ENCODE measurements at regions of chr4 and their contacts with region 1.

Region 1: DNA sequence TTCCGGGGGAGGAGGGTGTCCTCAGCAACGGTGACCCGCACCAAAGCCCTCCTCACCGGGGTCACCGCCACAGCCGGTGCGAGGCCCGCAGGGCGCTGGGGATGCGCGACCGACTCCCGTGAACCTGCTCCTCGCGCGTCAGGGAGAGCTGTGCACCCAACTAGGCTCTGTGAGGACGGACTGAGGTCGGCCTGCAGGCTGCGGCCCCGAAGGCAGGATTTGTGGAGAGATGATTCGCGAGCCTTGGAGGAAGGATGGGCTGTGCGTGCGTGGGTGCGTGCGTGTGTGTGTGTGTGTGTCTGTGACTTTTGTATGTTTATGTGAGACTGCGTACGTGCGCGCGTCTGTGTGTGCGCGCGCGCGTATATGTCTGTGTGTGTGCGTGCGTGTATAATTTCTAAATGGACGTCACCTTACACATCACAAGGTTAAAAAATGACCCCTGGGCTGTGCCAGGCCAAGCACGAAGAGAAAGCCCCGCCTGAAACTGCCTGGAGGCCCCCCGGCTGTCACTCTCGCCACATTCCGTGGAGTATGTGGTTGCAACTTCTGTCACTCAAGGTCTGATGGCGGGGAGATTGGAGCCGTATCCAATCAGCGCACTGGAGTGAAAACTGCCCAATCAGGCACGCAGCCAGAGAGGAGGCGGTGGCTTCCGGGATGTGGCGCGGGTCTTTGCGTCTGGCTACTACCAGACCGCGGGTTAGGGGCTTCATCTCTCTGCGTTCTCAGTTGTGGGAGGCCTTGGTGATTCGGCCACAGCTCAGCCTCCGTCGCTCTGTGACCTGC is at the start of gene ZNF141:
- DNase-seq: peak; percentile 96
- H3K4me3 ChIP-seq: peak within 1 kb of the TSS; percentile 58 to 93 (median 84)
- H3K27ac ChIP-seq: peak within 1 kb of the TSS; percentile 84 to 97 (median 95)
- H3K4me1 ChIP-seq: peaks cover 15 to 35% (median 23%) of the 10 kb centered on the region in 6 donors
- H3K27me3 ChIP-seq: no peaks in the 10 kb centered on the region
- CTCF ChIP-seq: peak in 1 of 11 experiments; percentile 20
- POLR2A ChIP-seq: peak in 2 of 3 donors; percentile 66 to 72
- total RNA-seq, gene ZNF141: 29.0 to 55.5 (median 34.0) TPM

Region 2: DNA sequence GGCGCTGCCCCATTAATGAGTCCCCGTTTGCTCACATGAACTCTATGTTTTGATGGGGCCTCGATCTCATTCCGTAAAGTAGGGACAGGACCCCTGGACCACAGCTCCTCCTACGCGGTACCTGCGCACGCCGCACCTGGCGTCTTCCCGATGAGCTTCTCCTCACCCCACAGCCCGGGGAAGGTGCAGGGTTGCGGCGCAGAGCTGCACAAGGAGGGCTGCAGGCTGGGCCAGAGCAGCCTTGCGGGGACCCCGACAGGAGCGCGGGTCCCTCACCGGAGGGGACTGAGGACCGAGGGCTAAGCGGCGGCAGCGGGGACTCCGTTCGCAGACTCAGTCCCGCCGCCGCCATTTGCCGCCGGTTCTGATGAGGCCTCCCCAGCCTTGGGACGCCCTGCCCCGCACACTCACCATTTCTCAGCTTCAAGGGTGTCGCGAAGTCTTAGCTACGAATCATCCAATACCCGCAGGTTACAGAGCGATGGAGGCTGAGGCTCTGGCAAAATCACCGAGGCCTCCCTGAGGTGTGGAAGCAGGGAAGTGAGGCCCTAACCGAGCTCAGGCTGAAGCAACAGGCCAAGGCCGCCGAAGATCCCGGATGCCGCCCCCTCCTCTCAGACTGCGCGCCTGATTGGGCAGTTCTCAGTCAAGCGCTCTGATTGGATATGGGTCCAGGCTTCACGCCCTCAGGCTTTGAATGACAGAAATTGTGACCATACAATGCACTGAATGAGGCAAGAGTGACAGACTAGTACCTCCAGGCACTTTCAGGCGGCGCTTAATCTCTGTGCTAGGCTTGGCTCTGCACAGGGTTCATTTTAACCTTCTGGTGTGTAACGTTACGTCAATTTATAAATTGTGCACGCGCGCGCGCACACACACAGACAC is 136.5 kb after region 1 on chr4:
- intact Hi-C with region 1: loop called (anchors 10 kb)
- DNase-seq: peak; percentile 95
- H3K4me3 ChIP-seq: peak overlapping the region; percentile 67 to 95 (median 79)
- H3K27ac ChIP-seq: peak overlapping the region; percentile 88 to 95 (median 92)
- H3K4me1 ChIP-seq: peaks cover 8 to 37% (median 20%) of the 10 kb centered on the region in 6 donors
- H3K27me3 ChIP-seq: no peaks in the 10 kb centered on the region
- CTCF ChIP-seq: no peak
- POLR2A ChIP-seq: peak; percentile 60 to 80 (median 67)

Region 3: GRCh38 chr4:532588-533317 is 195.4 kb after region 1 on chr4:
- intact Hi-C with region 1: no loop called
- DNase-seq: peak; percentile 47
- H3K4me3 ChIP-seq: no peak overlapping the region
- H3K27ac ChIP-seq: no peak overlapping the region
- H3K4me1 ChIP-seq: peaks cover 0 to 16% (median 7%) of the 10 kb centered on the region in 6 donors
- H3K27me3 ChIP-seq: no peaks in the 10 kb centered on the region
- CTCF ChIP-seq: no peak
- POLR2A ChIP-seq: no peak

Measured in spleen (tissue), 13 donors.